ENCODE measurements at regions of chr7 and their contacts with region 1.

Region 1: DNA sequence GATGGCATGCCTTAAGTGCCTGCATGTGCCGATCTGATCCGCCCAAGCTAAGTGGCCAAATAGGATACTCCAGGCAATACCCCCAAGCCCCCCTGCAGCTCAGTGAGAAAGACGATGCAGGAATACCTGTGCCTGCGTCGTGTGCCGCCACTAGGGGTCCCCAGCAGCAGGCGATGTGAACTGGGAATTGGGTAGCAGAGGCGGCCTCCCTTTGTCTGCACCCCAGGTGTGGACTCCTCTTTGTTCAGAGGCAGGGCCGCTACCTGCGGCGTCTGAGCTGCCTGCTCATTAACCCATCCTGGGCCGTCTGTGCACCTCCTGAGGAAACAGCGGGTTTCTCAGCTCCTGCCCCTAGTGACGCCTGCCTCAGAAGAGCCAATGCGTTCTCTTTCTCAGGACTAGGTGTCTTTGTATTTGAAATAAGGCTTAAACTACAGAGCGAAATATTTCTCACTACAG is 4.8 kb upstream of the CHN2 start:
- DNase-seq: peak; percentile 56
- H3K27ac ChIP-seq: no peak overlapping the region
- CTCF ChIP-seq: peak; percentile 92

Region 2: GRCh38 chr7:28768628-28769027 is 421.1 kb before region 1 on chr7:
- CTCF ChIA-PET with region 1: no interaction called
- POLR2A ChIA-PET with region 1: no interaction called
- DNase-seq: peak; percentile 11
- H3K27ac ChIP-seq: no peak overlapping the region
- CTCF ChIP-seq: no peak

Region 3: GRCh38 chr7:29035044-29035740 is 154.6 kb before region 1 on chr7:
- CTCF ChIA-PET with region 1: no interaction called
- POLR2A ChIA-PET with region 1: no interaction called
- DNase-seq: peak; percentile 89
- H3K27ac ChIP-seq: no peak overlapping the region
- CTCF ChIP-seq: no peak

Region 4: DNA sequence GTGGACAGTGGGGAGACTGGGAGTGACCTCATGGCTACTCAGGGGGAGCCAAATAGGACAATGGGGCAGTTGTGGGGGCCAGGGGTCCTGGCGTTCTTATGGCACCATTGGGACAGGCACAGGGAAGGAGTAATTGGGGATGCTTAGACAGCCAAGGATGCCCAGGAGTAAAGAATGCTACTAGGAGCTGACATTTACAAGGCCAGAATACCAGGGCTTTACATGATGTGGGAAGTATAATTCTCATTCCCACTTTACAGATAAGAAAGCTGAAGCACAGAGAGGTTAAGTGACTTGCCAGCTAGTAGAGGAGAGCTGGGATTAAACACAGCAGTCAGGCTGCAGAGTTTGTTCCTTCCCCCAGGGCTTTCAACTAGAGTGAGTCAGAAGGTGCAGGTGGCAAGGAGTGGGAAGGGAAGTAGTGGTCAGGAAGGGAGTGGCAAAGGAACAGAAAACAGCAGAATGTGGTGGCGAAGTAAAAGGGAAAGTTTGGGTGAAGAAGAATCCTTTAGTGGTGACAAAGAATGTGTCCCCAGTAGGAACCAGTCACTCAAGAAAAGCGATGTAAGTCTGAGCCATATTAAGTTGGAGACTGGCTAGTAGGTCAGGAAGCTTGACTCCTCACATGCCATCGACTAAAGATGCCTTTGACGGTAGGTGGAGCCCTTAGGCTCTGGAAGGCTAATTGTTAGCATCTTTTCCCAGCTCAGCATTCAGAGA is 76.2 kb before region 1 on chr7:
- CTCF ChIA-PET with region 1: interaction called, 13 read pairs
- POLR2A ChIA-PET with region 1: no interaction called
- DNase-seq: peak; percentile 47
- H3K27ac ChIP-seq: no peak overlapping the region
- CTCF ChIP-seq: no peak; the same call in 1 of the 2 replicates

Region 5: DNA sequence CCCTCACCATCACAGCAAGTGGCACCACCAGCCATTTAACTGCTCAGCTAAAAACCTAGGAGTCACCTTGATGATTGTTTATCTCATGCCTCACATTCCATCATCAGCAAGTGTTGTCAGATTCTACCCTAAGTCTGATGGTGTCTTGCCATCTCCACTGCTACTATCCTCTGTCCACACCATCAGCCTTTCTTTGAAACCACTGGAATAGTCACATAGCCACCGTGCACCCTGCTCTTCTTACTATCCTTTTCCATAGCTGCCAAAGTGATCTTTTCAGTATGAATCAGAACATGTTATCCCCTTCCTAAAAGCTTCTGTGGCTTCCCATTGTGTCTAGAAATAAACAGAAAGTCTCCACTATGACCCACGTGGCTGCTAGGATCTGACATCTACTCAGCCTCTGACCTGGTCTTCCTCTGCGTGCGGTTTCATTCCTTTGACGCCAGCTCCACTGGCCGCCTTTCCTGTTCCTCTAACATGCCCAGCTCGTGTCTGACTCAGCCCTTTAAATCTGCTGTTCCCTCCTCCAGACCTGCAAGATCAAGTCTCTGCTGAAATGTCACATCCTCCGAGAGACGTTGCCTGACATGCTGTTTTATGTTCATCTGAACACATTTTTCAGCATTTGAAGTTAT is 11.7 kb before region 1 on chr7:
- CTCF ChIA-PET with region 1: interaction called, 10 read pairs
- POLR2A ChIA-PET with region 1: no interaction called
- DNase-seq: no peak
- H3K27ac ChIP-seq: no peak overlapping the region
- CTCF ChIP-seq: no peak

Region 6: DNA sequence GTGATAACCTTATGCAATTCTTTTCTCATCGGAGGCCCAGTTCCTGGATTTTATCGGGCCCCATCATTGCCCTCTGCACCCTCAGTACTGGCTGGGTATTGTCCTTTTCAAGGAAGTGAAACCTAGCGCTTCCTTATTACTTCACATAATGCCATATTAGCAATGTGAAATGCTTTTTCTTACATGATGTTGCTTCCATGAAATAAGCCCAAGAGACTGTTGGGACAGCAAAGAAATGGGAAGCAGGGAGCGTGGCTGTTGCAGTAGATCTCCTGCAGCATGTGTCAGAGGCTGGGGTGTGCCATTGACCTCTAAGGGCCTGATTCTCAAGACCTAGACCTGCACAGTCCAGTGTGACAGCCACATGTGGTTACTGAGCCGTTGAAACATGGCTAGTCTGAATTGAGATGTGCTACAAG is 12.9 kb after region 1 on chr7:
- CTCF ChIA-PET with region 1: interaction called, 16 read pairs
- POLR2A ChIA-PET with region 1: no interaction called
- DNase-seq: no peak
- H3K27ac ChIP-seq: no peak overlapping the region
- CTCF ChIP-seq: no peak

Region 7: GRCh38 chr7:29345600-29345999 is 155.8 kb after region 1 on chr7:
- CTCF ChIA-PET with region 1: interaction called, 14 read pairs
- POLR2A ChIA-PET with region 1: no interaction called
- DNase-seq: peak; percentile 33
- H3K27ac ChIP-seq: no peak overlapping the region
- CTCF ChIP-seq: no peak; the same call in 1 of the 2 replicates

Region 8: DNA sequence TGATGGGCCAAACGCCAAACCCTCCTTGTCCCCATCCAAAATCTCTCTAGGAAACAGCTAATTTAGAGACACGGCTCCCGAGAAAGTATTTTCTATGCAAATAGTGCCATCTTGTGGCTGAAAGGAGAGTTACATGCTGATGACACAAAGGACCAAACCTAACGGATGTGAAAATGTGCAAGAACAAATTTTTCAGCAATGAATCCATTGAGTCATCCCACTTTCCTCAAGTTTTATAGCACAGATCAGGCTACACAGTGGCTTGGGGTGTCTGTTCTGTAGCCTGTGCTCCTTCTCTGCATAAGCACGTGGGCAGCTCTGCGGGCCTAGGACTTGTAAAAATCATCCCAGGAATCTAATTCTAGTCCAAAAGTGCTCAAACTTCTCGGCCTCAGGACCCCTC is 219.1 kb after region 1 on chr7:
- CTCF ChIA-PET with region 1: interaction called, 39 read pairs
- POLR2A ChIA-PET with region 1: no interaction called
- DNase-seq: peak; percentile 79
- H3K27ac ChIP-seq: no peak overlapping the region
- CTCF ChIP-seq: peak; percentile 77

Measured in RWPE1 (cell line).